Common myeloid progenitor, CD34-positive (primary cell): ENCODE measurements at regions of chr2 and their contacts with region 1.

Region 1: DNA sequence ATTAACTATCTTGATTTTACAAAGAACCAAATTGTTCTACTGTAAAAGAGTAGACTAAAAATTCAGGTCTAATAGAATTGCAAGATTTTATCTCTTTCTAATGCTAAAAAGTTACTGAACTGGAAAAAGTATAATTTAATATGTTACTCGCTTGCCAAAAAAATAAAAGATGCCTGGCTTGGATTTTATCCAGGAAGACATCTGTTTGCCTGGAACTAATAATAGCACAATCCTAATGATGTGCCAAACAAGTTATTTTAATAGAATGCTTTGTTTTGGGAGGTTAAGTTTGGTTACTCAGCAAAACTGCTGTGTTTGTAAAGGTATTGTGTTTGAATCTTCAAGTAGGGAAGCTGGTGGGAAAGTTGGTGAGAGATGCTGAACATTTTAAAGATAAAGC is 19.4 kb upstream of the ZSWIM2 start:
- DNase-seq: no peak
- H3K4me3 ChIP-seq: no peak overlapping the region
- H3K27ac ChIP-seq: no peak overlapping the region
- H3K4me1 ChIP-seq: no peaks in the 10 kb centered on the region
- H3K27me3 ChIP-seq: no peaks in the 10 kb centered on the region

Region 2: GRCh38 chr2:186751790-186752189 is 116.6 kb before region 1 on chr2:
- CTCF ChIA-PET with region 1: no interaction called
- POLR2A ChIA-PET with region 1: no interaction called
- DNase-seq: no peak
- H3K4me3 ChIP-seq: no peak overlapping the region
- H3K27ac ChIP-seq: no peak overlapping the region
- H3K4me1 ChIP-seq: peaks cover 0 to 14% (median 3%) of the 10 kb centered on the region in 4 experiments
- H3K27me3 ChIP-seq: no peaks in the 10 kb centered on the region

Region 3: DNA sequence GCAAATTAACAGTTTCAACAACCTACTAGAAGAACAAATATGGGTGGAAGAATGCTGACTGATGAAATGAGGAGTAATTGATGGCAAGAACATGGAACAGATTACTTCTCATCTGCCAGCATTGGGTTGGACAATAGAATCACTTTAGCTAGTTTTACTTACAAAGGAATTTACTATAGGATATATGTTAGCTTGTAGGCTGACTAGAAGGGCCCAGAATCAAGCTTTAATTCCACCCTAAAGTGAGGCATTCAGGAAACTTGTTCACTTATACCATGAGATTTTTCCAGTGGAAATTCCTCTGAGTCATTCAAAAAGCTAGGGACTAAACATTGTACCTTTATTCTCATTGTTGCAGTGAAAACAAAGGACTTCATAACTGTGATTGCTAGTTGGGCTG is 14.4 kb before region 1 on chr2:
- CTCF ChIA-PET with region 1: no interaction called
- POLR2A ChIA-PET with region 1: no interaction called
- DNase-seq: no peak
- H3K4me3 ChIP-seq: no peak overlapping the region
- H3K27ac ChIP-seq: no peak overlapping the region
- H3K4me1 ChIP-seq: peaks cover 2 to 8% (median 4%) of the 10 kb centered on the region in 4 experiments
- H3K27me3 ChIP-seq: no peaks in the 10 kb centered on the region

Region 4: GRCh38 chr2:186882511-186883071 is 14.2 kb after region 1 on chr2:
- CTCF ChIA-PET with region 1: interaction called, 15 read pairs
- POLR2A ChIA-PET with region 1: no interaction called
- DNase-seq: no peak
- H3K4me3 ChIP-seq: no peak overlapping the region
- H3K27ac ChIP-seq: no peak overlapping the region
- H3K4me1 ChIP-seq: peaks cover 20 to 40% (median 31%) of the 10 kb centered on the region in 4 experiments
- H3K27me3 ChIP-seq: no peaks in the 10 kb centered on the region